ENCODE measurements at regions of chr11 and their contacts with region 1.

Region 1: GRCh38 chr11:33736148-33736809 is at the start of gene CD59:
- DNase-seq: peak; percentile 97
- ATAC-seq: peak; percentile 78 to 84
- H3K4me3 ChIP-seq: peak within 1 kb of the TSS; percentile 78 to 96 (median 88)
- H3K27ac ChIP-seq: peak within 1 kb of the TSS; percentile 92 to 99 (median 98)
- H3K4me1 ChIP-seq: peaks cover 39 to 43% of the 10 kb centered on the region in 2 donors
- H3K27me3 ChIP-seq: no peaks in the 10 kb centered on the region
- CTCF ChIP-seq: peak in 1 of 5 experiments; percentile 18
- POLR2A ChIP-seq: peak; percentile 94 to 99
- total RNA-seq, gene CD59: 476 to 717 (median 695) TPM

Region 2: GRCh38 chr11:33564856-33565453 is 171.3 kb before region 1 on chr11:
- in situ Hi-C with region 1: no loop called
- intact Hi-C with region 1: no loop called
- DNase-seq: no peak
- ATAC-seq: no peak
- H3K4me3 ChIP-seq: no peak overlapping the region
- H3K27ac ChIP-seq: no peak overlapping the region
- H3K4me1 ChIP-seq: no peaks in the 10 kb centered on the region
- H3K27me3 ChIP-seq: no peaks in the 10 kb centered on the region
- CTCF ChIP-seq: no peak
- POLR2A ChIP-seq: no peak

Region 3: DNA sequence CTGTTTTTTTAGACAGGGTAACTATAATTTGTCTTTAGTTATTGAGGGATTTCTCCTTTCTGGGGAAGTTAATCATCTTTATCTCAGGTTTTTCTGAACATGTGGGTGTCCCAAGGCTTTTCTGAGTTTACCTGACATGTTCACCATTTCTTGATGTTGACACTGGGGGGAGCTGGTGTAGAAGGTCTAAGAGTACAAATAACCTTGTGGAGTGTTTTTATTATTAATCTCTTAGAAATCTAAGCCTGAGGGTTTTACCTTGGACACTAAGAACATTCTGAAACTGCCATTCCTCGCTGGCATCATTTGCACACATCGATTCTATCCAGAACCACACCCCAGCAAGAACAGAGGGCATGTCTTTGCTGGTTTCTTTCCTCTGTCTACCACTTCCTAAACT is 20.0 kb before region 1 on chr11:
- in situ Hi-C with region 1: no loop called
- intact Hi-C with region 1: loop called (anchors 2 kb)
- DNase-seq: no peak
- ATAC-seq: peak; percentile 27 to 42
- H3K4me3 ChIP-seq: no peak overlapping the region
- H3K27ac ChIP-seq: peak overlapping the region; percentile 67 to 99 (median 92)
- H3K4me1 ChIP-seq: peaks cover 52 to 65% of the 10 kb centered on the region in 2 donors
- H3K27me3 ChIP-seq: no peaks in the 10 kb centered on the region
- CTCF ChIP-seq: peak in 4 of 5 experiments; percentile 37 to 60 (median 45)
- POLR2A ChIP-seq: no peak

Measured in gastrocnemius medialis (tissue), 4 donors.